PC-3 (cell line): ENCODE measurements at regions of chr2 and their contacts with region 1.

Region 1: DNA sequence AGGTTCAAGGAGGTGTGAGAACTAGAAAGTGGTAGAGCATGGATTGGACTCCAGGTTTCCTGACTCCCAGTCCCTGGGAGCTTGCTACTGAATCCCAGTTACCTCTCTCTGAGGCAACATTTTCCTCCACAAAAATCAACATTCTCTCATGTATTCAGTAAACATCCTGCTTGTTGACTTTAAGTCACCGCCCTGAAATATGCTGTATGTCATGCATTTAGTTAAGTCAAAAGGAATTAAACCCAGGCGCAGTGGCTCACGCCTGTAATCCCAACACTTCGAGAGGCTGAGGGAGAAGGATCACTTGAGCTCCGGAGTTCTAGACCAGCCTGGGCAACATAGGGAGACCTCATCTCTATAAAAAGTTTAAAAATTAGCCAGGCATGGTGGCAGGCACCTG is 3.8 kb downstream of the MATN3 start:
- DNase-seq: peak; percentile 57
- ATAC-seq: peak; percentile 58
- H3K4me3 ChIP-seq: no peak overlapping the region
- H3K27ac ChIP-seq: no peak overlapping the region
- H3K4me1 ChIP-seq: peaks cover 18% of the 10 kb centered on the region
- H3K27me3 ChIP-seq: no peaks in the 10 kb centered on the region
- CTCF ChIP-seq: no peak

Region 2: GRCh38 chr2:19901442-19902215 is 107.1 kb before region 1 on chr2 and contains the start of gene TTC32:
- CTCF ChIA-PET with region 1: interaction called, 3 read pairs
- POLR2A ChIA-PET with region 1: no interaction called
- intact Hi-C with region 1: loop called (anchors 5 kb)
- DNase-seq: peak; percentile 92
- ATAC-seq: peak; percentile 81
- H3K4me3 ChIP-seq: peak within 1 kb of the TSS; percentile 85
- H3K27ac ChIP-seq: peak within 1 kb of the TSS; percentile 89
- H3K4me1 ChIP-seq: peaks cover 30% of the 10 kb centered on the region
- H3K27me3 ChIP-seq: no peaks in the 10 kb centered on the region
- CTCF ChIP-seq: no peak
- total RNA-seq, gene TTC32: 10.0 and 12.1 TPM in 2 replicates